K562 (cell line): ENCODE measurements at regions of chr2 and their contacts with region 1.

Region 1: DNA sequence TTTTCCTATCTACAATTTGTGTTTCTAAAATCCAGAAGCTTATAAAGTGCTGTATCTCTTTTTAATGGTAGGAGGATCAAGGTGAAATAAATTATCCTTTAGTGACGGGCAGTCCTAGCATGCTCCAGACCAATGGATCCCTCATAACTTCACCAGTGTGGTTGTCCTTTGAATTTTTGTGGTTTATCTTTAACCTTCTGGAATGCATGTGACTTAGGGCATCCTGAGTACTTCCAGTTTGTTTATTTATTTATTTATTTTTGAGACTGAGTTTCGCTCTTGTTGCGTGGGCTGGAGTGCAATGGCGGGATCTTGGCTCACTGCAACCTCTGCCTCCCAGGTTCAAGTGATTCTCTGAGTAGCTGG is 40.4 kb downstream of the NUP35 start:
- DNase-seq: no peak
- ATAC-seq: no peak; the same call in 2 of the 3 replicates
- H3K4me3 ChIP-seq: no peak overlapping the region
- H3K27ac ChIP-seq: no peak overlapping the region
- H3K4me1 ChIP-seq: no peaks in the 10 kb centered on the region
- H3K27me3 ChIP-seq: no peaks in the 10 kb centered on the region
- CTCF ChIP-seq: no peak
- EP300 ChIP-seq: no peak
- POLR2A ChIP-seq: 0 out of 2 replicates have a peak, but pooled peaks have one; percentile 11
- RAD21 ChIP-seq: no peak

Region 2: DNA sequence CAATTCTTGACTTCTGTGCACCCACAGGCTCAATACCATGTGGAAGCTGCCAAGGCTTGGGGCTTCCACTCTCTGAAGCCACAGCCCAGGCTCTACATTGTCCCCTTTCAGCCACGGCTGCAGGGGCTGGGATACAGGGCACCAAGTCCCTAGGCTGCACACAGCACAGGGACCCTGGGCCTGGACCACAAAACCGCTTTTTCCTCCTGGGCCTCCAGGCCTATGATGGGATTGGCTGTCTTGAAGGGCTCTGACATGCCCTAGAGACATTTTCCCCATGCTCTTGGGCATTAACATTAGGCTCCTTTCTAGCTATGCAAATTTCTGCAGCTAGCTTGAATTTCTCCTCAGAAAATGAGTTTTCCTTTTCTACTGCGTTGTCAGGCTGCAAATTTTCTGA is 10.7 kb before region 1 on chr2:
- CTCF ChIA-PET with region 1: no interaction called
- POLR2A ChIA-PET with region 1: interaction called, 10 read pairs
- in situ Hi-C with region 1: no loop called
- intact Hi-C with region 1: no loop called
- DNase-seq: no peak
- ATAC-seq: peak; percentile 25; the same call in 1 of the 3 replicates
- H3K4me3 ChIP-seq: no peak overlapping the region
- H3K27ac ChIP-seq: no peak overlapping the region
- H3K4me1 ChIP-seq: no peaks in the 10 kb centered on the region
- H3K27me3 ChIP-seq: no peaks in the 10 kb centered on the region
- CTCF ChIP-seq: no peak
- EP300 ChIP-seq: no peak
- POLR2A ChIP-seq: no peak
- RAD21 ChIP-seq: no peak

Region 3: GRCh38 chr2:183207110-183207509 is 42.5 kb after region 1 on chr2:
- CTCF ChIA-PET with region 1: no interaction called
- POLR2A ChIA-PET with region 1: no interaction called
- in situ Hi-C with region 1: no loop called
- intact Hi-C with region 1: no loop called
- DNase-seq: peak in 1 of 4 experiments; percentile 10
- ATAC-seq: peak; percentile 41
- H3K4me3 ChIP-seq: no peak overlapping the region
- H3K27ac ChIP-seq: no peak overlapping the region
- H3K4me1 ChIP-seq: no peaks in the 10 kb centered on the region
- H3K27me3 ChIP-seq: no peaks in the 10 kb centered on the region
- CTCF ChIP-seq: no peak
- EP300 ChIP-seq: no peak
- POLR2A ChIP-seq: no peak
- RAD21 ChIP-seq: no peak